Ascending aorta (tissue), 2 donors: ENCODE measurements at regions of chr4 and their contacts with region 1.

Region 1: DNA sequence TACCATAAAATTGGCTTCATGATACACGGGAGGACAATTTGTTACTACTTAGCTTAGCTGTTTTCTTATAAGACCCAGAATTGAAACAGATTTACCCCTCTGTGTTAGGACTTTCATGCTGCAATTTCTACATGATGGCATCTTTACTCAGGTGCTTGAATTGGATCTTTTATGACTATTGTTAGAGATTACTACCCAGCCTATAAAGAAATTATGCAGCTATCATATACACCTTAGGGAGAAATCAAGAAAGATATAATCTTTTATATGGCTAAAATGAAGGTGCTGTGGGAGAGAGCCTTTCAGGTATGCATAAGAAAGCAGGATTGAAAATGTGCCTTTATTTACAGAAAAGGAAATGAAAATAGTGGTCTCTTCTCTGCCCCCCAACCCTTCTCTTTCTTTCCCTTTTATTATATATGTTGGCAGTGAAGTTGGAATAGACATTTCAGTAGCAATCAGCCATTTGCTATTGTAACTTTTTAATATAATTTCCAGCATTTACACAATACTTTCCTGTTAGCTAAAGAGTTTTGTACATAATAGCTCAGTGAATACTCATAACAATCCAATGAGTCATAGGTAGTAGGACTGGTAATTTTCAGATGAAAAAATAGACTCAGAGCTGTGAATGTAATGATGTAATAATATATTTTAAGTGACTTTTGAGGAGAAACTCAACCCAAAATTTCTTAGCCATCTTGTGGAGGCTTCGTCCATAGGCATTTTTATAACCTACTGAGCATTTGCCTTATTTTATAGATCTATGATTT is 311.8 kb downstream of the ADGRL3 start:
- DNase-seq: no peak
- H3K4me3 ChIP-seq: no peak overlapping the region
- H3K27ac ChIP-seq: peak overlapping the region; percentile 3 to 27
- H3K4me1 ChIP-seq: peaks cover 0 to 10% of the 10 kb centered on the region in 2 donors
- H3K27me3 ChIP-seq: no peaks in the 10 kb centered on the region
- CTCF ChIP-seq: no peak

Region 2: GRCh38 chr4:61200187-61200915 is 311.6 kb before region 1 on chr4 and contains the start of gene ADGRL3:
- intact Hi-C with region 1: loop called (anchors 5 kb)
- DNase-seq: peak in 1 of 2 donors; percentile 68
- H3K4me3 ChIP-seq: peak within 1 kb of the TSS; percentile 83 to 88
- H3K27ac ChIP-seq: peak within 1 kb of the TSS; percentile 68 to 72
- H3K4me1 ChIP-seq: no peaks in the 10 kb centered on the region
- H3K27me3 ChIP-seq: no peaks in the 10 kb centered on the region
- CTCF ChIP-seq: no peak
- total RNA-seq, gene ADGRL3: 22.2 TPM

Region 3: GRCh38 chr4:61273233-61273632 is 238.7 kb before region 1 on chr4:
- intact Hi-C with region 1: loop called (anchors 10 kb)
- DNase-seq: no peak
- H3K4me3 ChIP-seq: peak overlapping the region in 1 of 2 donors; percentile 37
- H3K27ac ChIP-seq: peak overlapping the region; percentile 3 to 14
- H3K4me1 ChIP-seq: peaks cover 0 to 13% of the 10 kb centered on the region in 2 donors
- H3K27me3 ChIP-seq: no peaks in the 10 kb centered on the region
- CTCF ChIP-seq: no peak

Region 4: GRCh38 chr4:61555789-61556188 is 43.9 kb after region 1 on chr4:
- intact Hi-C with region 1: loop called (anchors 1 kb)
- DNase-seq: no peak
- H3K4me3 ChIP-seq: no peak overlapping the region
- H3K27ac ChIP-seq: peak overlapping the region in 1 of 2 donors; percentile 48
- H3K4me1 ChIP-seq: no peaks in the 10 kb centered on the region
- H3K27me3 ChIP-seq: no peaks in the 10 kb centered on the region
- CTCF ChIP-seq: no peak